Endothelial cell of umbilical vein (primary cell): ENCODE measurements at regions of chr6 and their contacts with region 1.

Region 1: GRCh38 chr6:46862381-46862780 is 59.4 kb downstream of the ADGRF5 start:
- DNase-seq: no peak
- H3K4me3 ChIP-seq: no peak overlapping the region
- H3K27ac ChIP-seq: no peak overlapping the region
- H3K4me1 ChIP-seq: peaks cover 2% of the 10 kb centered on the region
- H3K27me3 ChIP-seq: no peaks in the 10 kb centered on the region
- CTCF ChIP-seq: no peak
- POLR2A ChIP-seq: no peak

Region 2: GRCh38 chr6:46983007-46983411 is 120.6 kb after region 1 on chr6:
- CTCF ChIA-PET with region 1: interaction called, 10 read pairs
- POLR2A ChIA-PET with region 1: no interaction called
- dilution Hi-C with region 1: no loop called
- intact Hi-C with region 1: no loop called
- DNase-seq: peak; percentile 27
- H3K4me3 ChIP-seq: no peak overlapping the region
- H3K27ac ChIP-seq: no peak overlapping the region
- H3K4me1 ChIP-seq: peaks cover 19% of the 10 kb centered on the region
- H3K27me3 ChIP-seq: no peaks in the 10 kb centered on the region
- CTCF ChIP-seq: no peak
- POLR2A ChIP-seq: no peak